Common myeloid progenitor, CD34-positive (primary cell): ENCODE measurements at regions of chr21 and their contacts with region 1.

Region 1: DNA sequence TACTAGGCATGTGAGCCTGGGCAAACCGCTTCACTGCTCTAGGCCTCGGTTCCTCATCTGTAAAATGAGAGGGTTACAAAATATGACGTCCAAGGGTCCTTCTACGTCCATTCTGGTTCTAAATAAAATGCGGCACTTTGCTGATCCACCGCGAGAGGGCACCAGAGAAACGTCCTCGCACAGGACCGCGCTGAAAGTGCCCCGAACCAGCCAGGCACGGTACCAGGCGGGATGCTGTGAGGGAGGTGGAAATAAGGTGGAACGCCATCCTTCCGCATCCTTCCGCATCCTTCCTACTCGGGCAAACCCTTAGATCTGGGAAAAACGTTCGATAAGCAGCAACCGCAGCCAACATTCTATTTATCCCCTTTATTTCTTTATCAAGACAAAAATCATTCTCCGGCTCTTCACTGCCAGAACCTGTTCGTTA is 60.3 kb upstream of the KRTAP19-8 start:
- DNase-seq: peak; percentile 63 to 78 (median 74)
- H3K4me3 ChIP-seq: no peak overlapping the region
- H3K27ac ChIP-seq: no peak overlapping the region
- H3K4me1 ChIP-seq: peaks cover 0 to 4% (median 0%) of the 10 kb centered on the region in 4 experiments
- H3K27me3 ChIP-seq: no peaks in the 10 kb centered on the region

Region 2: GRCh38 chr21:31124010-31124409 is 25.4 kb after region 1 on chr21:
- CTCF ChIA-PET with region 1: no interaction called
- POLR2A ChIA-PET with region 1: no interaction called
- DNase-seq: peak in 2 of 3 donors; percentile 42 to 55
- H3K4me3 ChIP-seq: no peak overlapping the region
- H3K27ac ChIP-seq: no peak overlapping the region
- H3K4me1 ChIP-seq: peaks cover 0 to 6% (median 0%) of the 10 kb centered on the region in 4 experiments
- H3K27me3 ChIP-seq: peaks cover 0 to 13% (median 6%) of the 10 kb centered on the region in 5 experiments

Region 3: DNA sequence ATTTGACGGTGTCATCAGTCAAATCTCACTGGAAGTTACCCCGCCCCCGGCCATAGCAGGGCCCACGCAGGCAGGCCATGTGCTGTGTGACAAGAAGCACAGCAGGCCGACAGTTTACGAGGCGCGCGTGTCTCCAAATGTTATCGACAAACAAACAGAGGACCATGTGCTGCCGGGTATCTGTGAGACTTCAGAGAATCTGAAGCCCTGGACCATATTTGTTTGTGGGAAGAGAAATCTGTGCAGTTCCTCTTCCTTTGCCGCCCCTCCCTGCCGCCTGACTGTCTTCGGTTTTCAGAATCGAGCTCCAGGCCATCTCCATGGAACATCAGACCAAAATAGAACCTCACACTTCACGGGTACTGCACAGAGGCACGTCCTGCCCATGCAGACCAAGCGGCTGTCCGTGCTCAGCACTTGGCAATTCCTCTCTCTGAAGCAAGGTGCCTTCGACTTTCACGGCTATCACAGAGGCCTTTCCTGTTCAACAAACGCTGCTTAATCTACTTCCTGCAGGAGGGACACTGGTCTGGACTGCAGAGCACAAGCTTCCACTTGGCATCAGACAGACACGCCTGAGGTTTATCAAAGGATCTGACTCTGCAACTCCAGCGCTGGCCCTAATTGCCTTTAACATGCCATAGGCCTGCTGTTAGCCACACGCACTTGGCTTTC is 75.4 kb after region 1 on chr21:
- CTCF ChIA-PET with region 1: interaction called, 94 read pairs
- POLR2A ChIA-PET with region 1: no interaction called
- DNase-seq: peak; percentile 74 to 94 (median 83)
- H3K4me3 ChIP-seq: peak overlapping the region in 2 of 7 experiments; percentile 33 to 34
- H3K27ac ChIP-seq: no peak overlapping the region
- H3K4me1 ChIP-seq: peaks cover 7 to 44% (median 39%) of the 10 kb centered on the region in 4 experiments
- H3K27me3 ChIP-seq: peaks cover 0 to 9% (median 0%) of the 10 kb centered on the region in 5 experiments

Region 4: DNA sequence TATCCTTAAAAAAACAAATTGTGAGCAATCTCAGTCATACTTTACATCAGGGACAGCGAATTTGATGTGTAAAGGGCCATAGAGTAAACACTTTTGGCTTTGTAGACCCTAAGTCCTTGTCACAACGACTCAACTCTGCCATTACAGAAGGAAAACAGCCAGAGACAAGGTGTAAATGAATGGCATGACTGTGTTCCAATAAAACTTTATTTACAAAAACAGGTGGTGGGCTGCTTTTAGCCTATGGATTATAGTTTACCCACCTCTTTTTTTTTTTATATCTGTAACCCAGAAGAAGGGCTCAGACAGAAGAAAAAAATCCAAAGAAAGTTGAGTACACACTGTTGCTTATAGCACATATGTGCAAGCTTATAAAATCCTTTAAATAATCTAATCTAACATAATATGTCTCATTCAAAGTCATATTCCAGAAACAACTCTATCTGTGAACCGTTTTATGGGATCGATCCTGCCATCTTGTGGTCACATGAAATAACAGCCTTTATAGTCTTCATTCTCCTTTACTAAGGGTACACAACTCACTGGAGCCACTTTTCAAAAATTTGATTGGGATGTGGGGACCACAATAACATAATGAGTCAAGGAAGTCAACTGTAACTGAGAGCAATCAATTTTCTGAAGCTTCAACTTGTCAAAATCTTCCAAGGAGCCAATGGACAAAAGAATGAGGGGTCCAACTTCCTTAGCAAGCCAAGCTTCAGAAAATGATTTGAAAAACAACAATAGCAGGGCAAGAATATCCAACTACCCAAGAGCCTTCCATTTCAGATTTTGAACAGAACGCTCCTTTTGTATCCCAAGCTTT is 81.9 kb after region 1 on chr21:
- CTCF ChIA-PET with region 1: interaction called, 94 read pairs
- POLR2A ChIA-PET with region 1: no interaction called
- DNase-seq: peak; percentile 56 to 72 (median 65)
- H3K4me3 ChIP-seq: no peak overlapping the region
- H3K27ac ChIP-seq: no peak overlapping the region
- H3K4me1 ChIP-seq: peaks cover 7 to 30% (median 26%) of the 10 kb centered on the region in 4 experiments
- H3K27me3 ChIP-seq: no peaks in the 10 kb centered on the region

Region 5: GRCh38 chr21:31382060-31382459 is 283.5 kb after region 1 on chr21:
- CTCF ChIA-PET with region 1: no interaction called
- POLR2A ChIA-PET with region 1: no interaction called
- DNase-seq: peak; percentile 81 to 93 (median 86)
- H3K4me3 ChIP-seq: peak overlapping the region in 1 of 7 experiments; percentile 10
- H3K27ac ChIP-seq: no peak overlapping the region
- H3K4me1 ChIP-seq: peaks cover 0 to 14% (median 7%) of the 10 kb centered on the region in 4 experiments
- H3K27me3 ChIP-seq: no peaks in the 10 kb centered on the region